SK-N-SH (cell line): ENCODE measurements at regions of chr7 and their contacts with region 1.

Region 1: GRCh38 chr7:104627516-104627915 is 299.1 kb downstream of the LHFPL3 start:
- DNase-seq: no peak
- H3K4me3 ChIP-seq: no peak overlapping the region
- H3K27ac ChIP-seq: peak overlapping the region in 1 of 2 experiments; percentile 86; a peak in 2 of 4 replicates
- H3K4me1 ChIP-seq: peaks cover 0 to 42% of the 10 kb centered on the region in 2 experiments; a peak in 2 of 4 replicates
- H3K27me3 ChIP-seq: no peaks in the 10 kb centered on the region
- CTCF ChIP-seq: no peak
- EP300 ChIP-seq: no peak
- RAD21 ChIP-seq: no peak

Region 2: DNA sequence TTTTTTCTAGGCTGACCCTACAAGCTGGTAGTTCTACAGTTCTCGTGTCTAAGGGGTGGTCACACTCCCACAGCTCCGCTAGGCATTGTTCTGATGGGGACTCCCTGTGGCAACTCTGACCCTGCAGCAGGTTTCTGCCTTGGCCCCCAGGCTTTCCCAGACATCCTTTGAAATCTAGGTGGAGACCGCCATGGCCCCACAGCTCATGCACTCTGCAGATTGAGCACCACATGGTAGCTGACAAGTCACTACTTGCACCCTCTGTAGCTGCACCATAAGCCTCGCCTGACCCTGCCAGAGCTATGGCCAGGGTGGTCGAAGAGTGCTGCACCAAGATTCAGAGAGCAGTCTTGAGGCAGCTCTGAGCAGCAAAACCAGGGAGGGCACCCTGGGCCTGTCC is 23.6 kb before region 1 on chr7:
- CTCF ChIA-PET with region 1: no interaction called
- POLR2A ChIA-PET with region 1: no interaction called
- DNase-seq: no peak
- H3K4me3 ChIP-seq: no peak overlapping the region
- H3K27ac ChIP-seq: no peak overlapping the region
- H3K4me1 ChIP-seq: no peaks in the 10 kb centered on the region
- H3K27me3 ChIP-seq: no peaks in the 10 kb centered on the region
- CTCF ChIP-seq: no peak
- EP300 ChIP-seq: no peak
- RAD21 ChIP-seq: no peak

Region 3: GRCh38 chr7:104643587-104644217 is 16.2 kb after region 1 on chr7:
- CTCF ChIA-PET with region 1: interaction called, 27 read pairs
- POLR2A ChIA-PET with region 1: interaction called, 4 read pairs
- DNase-seq: peak; percentile 49
- H3K4me3 ChIP-seq: no peak overlapping the region
- H3K27ac ChIP-seq: no peak overlapping the region
- H3K4me1 ChIP-seq: peaks cover 0 to 2% of the 10 kb centered on the region in 2 experiments; a peak in 1 of 4 replicates
- H3K27me3 ChIP-seq: no peaks in the 10 kb centered on the region; the same call in 1 of the 2 replicates
- CTCF ChIP-seq: peak; percentile 81
- EP300 ChIP-seq: no peak
- RAD21 ChIP-seq: peak; percentile 62

Region 4: GRCh38 chr7:104862719-104863118 is 235.2 kb after region 1 on chr7:
- CTCF ChIA-PET with region 1: interaction called, 10 read pairs
- POLR2A ChIA-PET with region 1: no interaction called
- DNase-seq: peak; percentile 63
- H3K4me3 ChIP-seq: no peak overlapping the region
- H3K27ac ChIP-seq: no peak overlapping the region
- H3K4me1 ChIP-seq: peaks cover 0 to 4% of the 10 kb centered on the region in 2 experiments; a peak in 1 of 4 replicates
- H3K27me3 ChIP-seq: peaks cover 54% of the 10 kb centered on the region
- CTCF ChIP-seq: peak; percentile 58
- EP300 ChIP-seq: no peak
- RAD21 ChIP-seq: peak; percentile 66